ENCODE measurements at regions of chr3 and their contacts with region 1.

Region 1: DNA sequence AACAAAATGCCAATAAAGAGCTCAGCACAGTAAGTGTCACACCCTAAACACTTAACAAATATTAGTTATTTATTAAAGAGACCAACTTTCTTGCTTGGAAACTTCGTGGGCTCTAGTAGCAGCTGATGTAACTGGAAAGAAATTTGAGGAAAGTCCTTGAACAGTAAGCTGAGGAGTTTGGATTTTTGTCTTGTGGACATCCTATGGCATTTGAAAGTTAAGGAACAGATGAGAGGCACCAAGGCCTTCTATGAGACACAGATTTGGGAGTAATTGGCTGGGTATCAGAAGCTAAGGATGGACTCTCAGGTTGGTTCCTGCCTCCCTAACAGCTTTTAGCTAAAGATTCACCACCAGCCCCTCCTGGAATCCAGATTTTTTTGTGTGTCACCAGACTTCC is 59.7 kb upstream of the FILIP1L start:
- DNase-seq: no peak
- H3K4me3 Mint-ChIP-seq: no peak overlapping the region
- H3K27ac Mint-ChIP-seq: no peak overlapping the region
- H3K4me1 Mint-ChIP-seq: no peaks in the 10 kb centered on the region
- H3K27me3 Mint-ChIP-seq: no peaks in the 10 kb centered on the region

Region 2: DNA sequence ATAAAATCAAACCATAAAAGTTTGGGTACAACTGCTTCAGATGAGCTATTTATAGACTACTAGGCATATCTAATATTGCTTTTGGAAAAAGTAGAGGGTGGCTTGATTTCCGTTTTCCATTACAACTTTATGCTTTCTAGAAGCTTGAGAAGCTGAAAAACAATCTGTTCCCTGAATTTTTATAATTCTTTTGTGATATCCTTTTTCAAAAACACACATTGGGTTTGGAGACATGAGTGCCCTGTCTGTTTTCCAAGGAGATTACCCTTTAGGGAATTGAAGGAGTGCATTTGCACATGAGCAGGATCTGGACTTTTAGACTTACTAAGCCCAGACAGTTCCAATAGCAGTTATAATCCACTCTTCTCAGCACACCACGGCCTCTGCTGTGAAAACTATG is 10.2 kb before region 1 on chr3:
- CTCF ChIA-PET with region 1: interaction called, 11 read pairs
- POLR2A ChIA-PET with region 1: no interaction called
- DNase-seq: no peak
- H3K4me3 Mint-ChIP-seq: no peak overlapping the region
- H3K27ac Mint-ChIP-seq: no peak overlapping the region
- H3K4me1 Mint-ChIP-seq: no peaks in the 10 kb centered on the region
- H3K27me3 Mint-ChIP-seq: no peaks in the 10 kb centered on the region